Spleen (tissue), 13 donors: ENCODE measurements at regions of chr16 and their contacts with region 1.

Region 1: DNA sequence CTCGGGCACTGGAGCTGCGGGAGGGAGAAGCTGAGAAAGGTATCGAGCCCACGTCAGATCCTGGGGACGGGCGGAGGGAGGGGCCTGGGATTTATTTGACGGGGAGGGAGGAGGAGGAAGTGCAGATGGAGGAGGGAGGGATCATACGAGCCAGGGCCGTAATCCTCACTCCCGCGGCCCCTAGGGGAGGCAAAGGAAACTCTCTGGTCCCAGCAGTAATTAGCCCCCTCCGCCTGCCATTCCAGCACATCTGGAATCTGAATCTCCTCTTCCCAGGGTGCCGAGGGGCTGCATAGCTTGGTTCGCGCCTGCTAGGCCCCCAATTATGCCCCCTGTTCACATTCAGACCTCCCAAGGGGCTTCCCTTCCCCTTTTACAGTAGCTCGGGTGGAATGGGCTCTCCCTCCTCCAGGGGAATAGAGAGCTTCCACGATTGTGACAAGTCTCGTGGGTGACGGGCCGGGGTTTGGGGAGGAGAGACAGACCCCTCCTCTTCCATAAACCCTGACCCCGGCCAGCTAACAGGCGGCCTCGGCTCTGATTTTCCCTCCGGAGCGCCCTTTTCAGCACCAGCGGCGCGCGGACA is at the start of gene SEZ6L2:
- DNase-seq: no peak
- H3K4me3 ChIP-seq: peak within 1 kb of the TSS; percentile 54 to 90 (median 72)
- H3K27ac ChIP-seq: peak within 1 kb of the TSS in 5 of 8 donors; percentile 22 to 69 (median 36)
- H3K4me1 ChIP-seq: peaks cover 0 to 27% (median 18%) of the 10 kb centered on the region in 6 donors
- H3K27me3 ChIP-seq: peaks cover 0 to 66% (median 27%) of the 10 kb centered on the region in 7 donors
- CTCF ChIP-seq: peak in 1 of 11 experiments; percentile 6
- POLR2A ChIP-seq: no peak
- total RNA-seq, gene SEZ6L2: 1.9 to 4.1 (median 2.7) TPM

Region 2: GRCh38 chr16:29256501-29256981 is 643.1 kb before region 1 on chr16:
- intact Hi-C with region 1: no loop called
- DNase-seq: no peak
- H3K4me3 ChIP-seq: no peak overlapping the region
- H3K27ac ChIP-seq: no peak overlapping the region
- H3K4me1 ChIP-seq: peaks cover 0 to 16% (median 4%) of the 10 kb centered on the region in 6 donors
- H3K27me3 ChIP-seq: no peaks in the 10 kb centered on the region
- CTCF ChIP-seq: no peak
- POLR2A ChIP-seq: no peak

Region 3: DNA sequence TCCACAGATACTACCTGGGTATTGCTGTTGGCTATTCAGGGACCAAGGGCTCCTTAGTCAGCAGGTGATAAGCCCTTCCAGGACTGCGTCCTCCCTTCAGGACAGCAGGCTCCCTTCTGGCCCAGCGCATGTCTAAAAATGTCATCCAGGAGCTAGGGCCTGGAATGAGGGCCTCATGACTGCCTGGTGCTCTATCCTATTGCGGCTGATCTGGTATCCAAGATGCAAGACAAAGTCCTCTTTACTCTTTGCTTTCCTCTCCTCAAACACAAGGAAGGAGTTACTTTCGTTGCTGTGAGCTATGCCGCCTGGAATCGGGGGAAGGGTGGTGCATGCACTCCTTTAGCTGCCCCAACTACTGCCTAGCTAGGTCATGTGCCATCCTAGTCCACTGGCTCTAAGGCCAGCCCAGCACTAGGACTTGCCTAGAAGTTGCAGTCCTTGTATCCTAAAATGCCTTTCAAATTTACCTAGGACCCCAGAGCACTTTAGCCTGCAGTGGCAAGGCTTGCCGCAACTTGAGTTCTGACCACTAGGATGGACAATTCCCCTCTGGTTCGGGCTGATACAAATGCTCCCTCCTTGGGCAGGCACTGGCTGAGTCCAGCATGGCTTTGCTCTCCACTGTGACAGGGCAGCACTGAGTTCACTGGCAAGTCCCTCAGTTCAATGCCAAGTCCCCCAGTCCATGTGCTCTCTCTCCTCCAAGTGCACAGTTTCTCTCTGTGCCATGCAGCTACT is 52.2 kb after region 1 on chr16:
- intact Hi-C with region 1: loop called (anchors 10 kb)
- DNase-seq: no peak
- H3K4me3 ChIP-seq: no peak overlapping the region
- H3K27ac ChIP-seq: no peak overlapping the region
- H3K4me1 ChIP-seq: no peaks in the 10 kb centered on the region
- H3K27me3 ChIP-seq: no peaks in the 10 kb centered on the region
- CTCF ChIP-seq: no peak
- POLR2A ChIP-seq: no peak

Region 4: GRCh38 chr16:30166202-30166902 is 266.7 kb after region 1 on chr16:
- intact Hi-C with region 1: no loop called
- DNase-seq: peak; percentile 74
- H3K4me3 ChIP-seq: peak overlapping the region in 2 of 8 donors; percentile 3 to 38
- H3K27ac ChIP-seq: peak overlapping the region in 7 of 8 donors; percentile 39 to 84 (median 67)
- H3K4me1 ChIP-seq: peaks cover 6 to 34% (median 20%) of the 10 kb centered on the region in 6 donors
- H3K27me3 ChIP-seq: no peaks in the 10 kb centered on the region
- CTCF ChIP-seq: no peak
- POLR2A ChIP-seq: no peak